ENCODE measurements at regions of chr21 and their contacts with region 1.

Region 1: DNA sequence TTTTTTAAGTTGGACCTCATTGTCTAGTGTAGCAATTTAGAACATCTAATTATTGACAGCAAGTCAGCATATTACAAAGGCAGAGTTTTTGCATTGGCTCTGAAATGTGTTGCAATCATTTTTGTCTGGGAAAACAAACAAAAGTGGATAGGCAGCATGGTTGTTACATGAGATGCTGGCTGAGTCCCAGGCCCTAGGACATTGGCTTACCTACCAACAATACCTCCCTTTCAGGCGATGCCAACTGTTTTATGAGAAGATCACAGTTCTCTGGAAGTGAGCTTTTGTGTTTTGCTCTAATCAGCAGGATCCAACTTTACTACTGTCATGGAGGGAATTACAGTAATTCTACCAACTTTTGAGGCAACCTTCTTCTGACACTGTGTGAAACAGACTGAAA is 71.5 kb upstream of the CXADR start:
- DNase-seq: peak; percentile 97
- H3K4me3 Mint-ChIP-seq: no peak overlapping the region
- H3K27ac Mint-ChIP-seq: no peak overlapping the region
- H3K4me1 Mint-ChIP-seq: peaks cover 21% of the 10 kb centered on the region
- H3K27me3 Mint-ChIP-seq: no peaks in the 10 kb centered on the region
- CTCF ChIP-seq: no peak

Region 2: GRCh38 chr21:16492892-16493291 is 948.5 kb before region 1 on chr21:
- CTCF ChIA-PET with region 1: no interaction called
- POLR2A ChIA-PET with region 1: no interaction called
- intact Hi-C with region 1: no loop called
- DNase-seq: no peak
- H3K4me3 Mint-ChIP-seq: no peak overlapping the region
- H3K27ac Mint-ChIP-seq: no peak overlapping the region
- H3K4me1 Mint-ChIP-seq: no peaks in the 10 kb centered on the region
- H3K27me3 Mint-ChIP-seq: no peaks in the 10 kb centered on the region
- CTCF ChIP-seq: no peak

Region 3: GRCh38 chr21:17491716-17492414 is 50.5 kb after region 1 on chr21:
- CTCF ChIA-PET with region 1: no interaction called
- POLR2A ChIA-PET with region 1: interaction called, 10 read pairs
- intact Hi-C with region 1: no loop called
- DNase-seq: peak; percentile 96
- H3K4me3 Mint-ChIP-seq: peak overlapping the region; percentile 0
- H3K27ac Mint-ChIP-seq: peak overlapping the region; percentile 86
- H3K4me1 Mint-ChIP-seq: peaks cover 32% of the 10 kb centered on the region
- H3K27me3 Mint-ChIP-seq: peaks cover 19% of the 10 kb centered on the region
- CTCF ChIP-seq: no peak

Region 4: GRCh38 chr21:17570786-17571185 is 129.4 kb after region 1 on chr21:
- CTCF ChIA-PET with region 1: no interaction called
- POLR2A ChIA-PET with region 1: no interaction called
- intact Hi-C with region 1: no loop called
- DNase-seq: no peak
- H3K4me3 Mint-ChIP-seq: no peak overlapping the region
- H3K27ac Mint-ChIP-seq: no peak overlapping the region
- H3K4me1 Mint-ChIP-seq: no peaks in the 10 kb centered on the region
- H3K27me3 Mint-ChIP-seq: no peaks in the 10 kb centered on the region
- CTCF ChIP-seq: no peak